MCF 10A (cell line): ENCODE measurements at regions of chr1 and their contacts with region 1.

Region 1: DNA sequence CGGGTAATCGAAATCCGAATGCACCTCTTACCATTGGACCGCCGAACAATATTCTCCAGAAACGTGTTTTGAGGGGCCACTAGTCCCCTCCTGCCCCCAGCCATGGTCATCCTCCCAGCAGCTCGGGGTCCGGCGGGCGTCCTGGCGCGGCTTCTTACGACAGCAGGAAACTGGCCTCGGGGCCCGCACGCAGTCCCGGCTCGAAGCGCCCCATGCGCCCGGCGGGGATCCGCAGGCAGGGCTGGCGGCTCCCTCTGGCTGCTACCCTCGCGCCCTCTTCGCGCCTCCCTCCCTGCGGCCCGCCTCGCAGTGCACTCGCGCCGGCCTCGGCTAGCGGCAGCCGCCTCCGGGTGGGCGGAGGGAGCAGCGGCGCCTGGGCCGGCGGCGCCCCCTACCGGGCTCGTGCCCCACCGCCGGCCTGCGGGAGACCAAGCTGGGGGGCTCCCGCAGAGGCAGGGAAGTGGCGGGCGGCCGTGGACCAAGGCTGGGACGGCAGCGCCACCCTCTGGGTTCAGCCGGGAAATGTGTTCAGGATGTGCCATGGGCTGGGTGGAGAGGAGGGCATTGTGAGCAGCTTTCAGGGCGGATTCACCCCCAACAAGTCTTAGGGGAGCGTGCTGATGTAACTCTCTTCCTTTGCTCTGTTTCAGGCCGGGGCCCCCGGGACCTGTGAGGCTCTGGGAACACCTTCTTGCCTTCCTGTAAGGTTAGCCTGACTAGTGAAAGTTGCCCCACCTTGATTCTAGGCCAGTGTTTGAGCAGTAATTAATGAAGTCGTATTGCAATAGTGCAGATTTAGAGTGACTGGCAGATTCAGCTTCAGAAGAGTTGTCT is at the start of gene KCNH1:
- DNase-seq: peak; percentile 81
- H3K4me3 Mint-ChIP-seq: peak within 1 kb of the TSS; percentile 43
- H3K27ac Mint-ChIP-seq: no peak within 1 kb of the TSS
- H3K4me1 Mint-ChIP-seq: no peaks in the 10 kb centered on the region
- H3K27me3 Mint-ChIP-seq: peaks cover 55% of the 10 kb centered on the region
- CTCF ChIP-seq: peak; percentile 100
- total RNA-seq, gene KCNH1: 0.17 and 0.19 TPM in 2 replicates

Region 2: DNA sequence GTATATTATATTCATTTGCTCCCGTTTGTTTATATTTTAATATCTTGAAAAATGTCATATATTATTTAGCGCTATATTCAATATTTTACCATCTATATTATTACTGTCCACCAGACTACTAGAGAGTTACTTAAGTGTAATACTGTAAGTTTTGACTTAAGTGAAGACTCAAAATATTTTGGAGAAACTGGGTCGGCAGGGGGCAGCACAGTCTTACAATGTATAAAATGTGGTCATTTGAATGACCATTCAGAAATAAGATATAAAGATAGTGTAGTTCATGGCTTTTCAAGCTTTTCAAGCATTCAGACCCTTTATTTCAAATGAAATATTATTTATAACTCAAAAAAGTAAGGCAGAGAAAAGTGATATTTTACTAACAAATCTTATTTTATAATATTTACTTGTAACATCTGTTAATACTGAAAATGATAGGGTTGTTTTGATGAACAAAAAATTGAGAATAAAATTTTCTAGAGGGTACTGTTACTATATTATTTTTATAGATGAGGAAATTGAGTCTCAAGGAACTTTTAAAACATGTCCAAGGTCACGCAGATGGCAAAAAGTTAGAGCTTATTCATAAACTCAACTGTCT is 990.5 kb before region 1 on chr1:
- CTCF ChIA-PET with region 1: no interaction called
- POLR2A ChIA-PET with region 1: no interaction called
- intact Hi-C with region 1: loop called (anchors 10 kb)
- DNase-seq: peak; percentile 89
- H3K4me3 Mint-ChIP-seq: no peak overlapping the region
- H3K27ac Mint-ChIP-seq: no peak overlapping the region
- H3K4me1 Mint-ChIP-seq: no peaks in the 10 kb centered on the region
- H3K27me3 Mint-ChIP-seq: peaks cover 32% of the 10 kb centered on the region
- CTCF ChIP-seq: peak; percentile 91

Region 3: DNA sequence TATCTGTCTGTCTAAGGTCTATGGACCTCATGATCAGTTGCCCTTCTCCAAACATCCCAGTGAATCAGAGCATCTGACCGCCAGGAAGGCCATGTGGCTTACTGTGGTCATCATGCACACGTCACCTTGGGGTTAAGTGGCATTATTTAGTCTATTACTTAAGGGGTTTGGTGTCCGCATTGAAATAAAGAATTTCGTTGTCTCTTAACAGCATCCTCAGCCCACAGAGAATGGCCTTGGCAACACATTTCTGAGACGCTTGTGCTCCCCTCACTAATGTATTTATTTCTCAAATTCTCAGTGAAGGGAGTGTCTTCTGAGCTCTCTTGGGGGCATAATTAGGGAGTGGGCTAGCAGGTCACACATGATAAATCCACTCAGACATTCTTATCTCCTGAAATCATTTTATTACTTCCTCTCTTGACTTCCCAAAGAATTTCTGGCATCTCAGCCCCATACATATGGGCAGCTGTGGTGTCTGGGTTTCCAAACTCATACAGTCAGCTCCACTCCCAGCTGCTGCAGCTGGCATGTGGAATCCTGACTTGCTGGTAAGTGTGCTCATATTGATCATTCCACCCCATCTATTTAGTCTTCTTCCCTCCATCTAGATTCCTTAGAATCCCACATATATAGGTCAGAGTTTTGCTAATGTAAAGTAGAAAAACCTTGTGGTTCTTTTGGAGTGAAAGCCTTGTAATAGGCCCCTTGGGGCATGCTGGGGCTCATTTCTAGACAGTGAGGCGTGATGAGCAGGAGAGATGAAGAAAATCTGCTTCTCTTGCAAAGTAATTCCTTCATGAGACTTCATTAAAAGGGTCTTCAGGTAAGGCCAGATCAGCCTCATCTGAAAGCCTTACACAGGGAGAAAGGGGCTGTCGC is 694.9 kb before region 1 on chr1:
- CTCF ChIA-PET with region 1: interaction called, 175 read pairs
- POLR2A ChIA-PET with region 1: no interaction called
- intact Hi-C with region 1: no loop called
- DNase-seq: peak; percentile 62
- H3K4me3 Mint-ChIP-seq: no peak overlapping the region
- H3K27ac Mint-ChIP-seq: no peak overlapping the region
- H3K4me1 Mint-ChIP-seq: peaks cover 6% of the 10 kb centered on the region
- H3K27me3 Mint-ChIP-seq: no peaks in the 10 kb centered on the region
- CTCF ChIP-seq: no peak

Region 4: DNA sequence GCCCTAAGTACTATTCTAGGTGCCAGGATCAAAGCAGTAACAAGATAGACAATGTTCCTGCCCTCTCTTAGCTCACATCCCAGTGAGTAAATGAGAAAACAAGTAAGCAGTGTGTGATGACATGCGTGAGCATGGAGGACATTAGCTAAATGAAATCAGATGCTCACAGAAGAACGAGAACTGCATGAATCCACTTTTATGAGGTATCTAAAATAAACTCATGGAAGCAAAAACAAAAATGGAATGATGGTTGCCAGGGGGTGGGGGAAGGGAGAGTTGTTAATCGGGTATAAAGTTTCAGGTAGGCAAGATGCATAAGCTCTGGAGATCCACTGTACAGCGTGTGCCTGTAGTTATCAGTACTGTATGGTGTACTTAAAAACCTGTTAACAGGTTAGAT is 610.2 kb before region 1 on chr1:
- CTCF ChIA-PET with region 1: interaction called, 13 read pairs
- POLR2A ChIA-PET with region 1: no interaction called
- intact Hi-C with region 1: no loop called
- DNase-seq: no peak
- H3K4me3 Mint-ChIP-seq: no peak overlapping the region
- H3K27ac Mint-ChIP-seq: no peak overlapping the region
- H3K4me1 Mint-ChIP-seq: no peaks in the 10 kb centered on the region
- H3K27me3 Mint-ChIP-seq: peaks cover 21% of the 10 kb centered on the region
- CTCF ChIP-seq: no peak

Region 5: GRCh38 chr1:210711825-210712612 is 422.0 kb before region 1 on chr1:
- CTCF ChIA-PET with region 1: no interaction called
- POLR2A ChIA-PET with region 1: no interaction called
- intact Hi-C with region 1: loop called (anchors 2 kb)
- DNase-seq: peak; percentile 39
- H3K4me3 Mint-ChIP-seq: no peak overlapping the region
- H3K27ac Mint-ChIP-seq: no peak overlapping the region
- H3K4me1 Mint-ChIP-seq: peaks cover 6% of the 10 kb centered on the region
- H3K27me3 Mint-ChIP-seq: no peaks in the 10 kb centered on the region
- CTCF ChIP-seq: peak; percentile 25

Region 6: GRCh38 chr1:211155040-211155439 is 21.0 kb after region 1 on chr1:
- CTCF ChIA-PET with region 1: interaction called, 24 read pairs
- POLR2A ChIA-PET with region 1: no interaction called
- intact Hi-C with region 1: no loop called
- DNase-seq: no peak
- H3K4me3 Mint-ChIP-seq: no peak overlapping the region
- H3K27ac Mint-ChIP-seq: no peak overlapping the region
- H3K4me1 Mint-ChIP-seq: no peaks in the 10 kb centered on the region
- H3K27me3 Mint-ChIP-seq: peaks cover 23% of the 10 kb centered on the region
- CTCF ChIP-seq: no peak

Region 7: GRCh38 chr1:211196880-211197279 is 62.8 kb after region 1 on chr1:
- CTCF ChIA-PET with region 1: no interaction called
- POLR2A ChIA-PET with region 1: no interaction called
- intact Hi-C with region 1: no loop called
- DNase-seq: peak; percentile 42
- H3K4me3 Mint-ChIP-seq: no peak overlapping the region
- H3K27ac Mint-ChIP-seq: no peak overlapping the region
- H3K4me1 Mint-ChIP-seq: peaks cover 24% of the 10 kb centered on the region
- H3K27me3 Mint-ChIP-seq: no peaks in the 10 kb centered on the region
- CTCF ChIP-seq: no peak